SK-N-SH (cell line): ENCODE measurements at regions of chr10 and their contacts with region 1.

Region 1: GRCh38 chr10:114876602-114877300 is 55.2 kb downstream of the FHIP2A start:
- DNase-seq: peak; percentile 80
- H3K4me3 ChIP-seq: peak overlapping the region in 1 of 2 experiments; percentile 43; a peak in 1 of 4 replicates
- H3K27ac ChIP-seq: no peak overlapping the region
- H3K4me1 ChIP-seq: peaks cover 1 to 6% of the 10 kb centered on the region in 2 experiments; a peak in 1 of 4 replicates
- H3K27me3 ChIP-seq: no peaks in the 10 kb centered on the region
- CTCF ChIP-seq: peak; percentile 81
- EP300 ChIP-seq: no peak
- RAD21 ChIP-seq: peak; percentile 94

Region 2: DNA sequence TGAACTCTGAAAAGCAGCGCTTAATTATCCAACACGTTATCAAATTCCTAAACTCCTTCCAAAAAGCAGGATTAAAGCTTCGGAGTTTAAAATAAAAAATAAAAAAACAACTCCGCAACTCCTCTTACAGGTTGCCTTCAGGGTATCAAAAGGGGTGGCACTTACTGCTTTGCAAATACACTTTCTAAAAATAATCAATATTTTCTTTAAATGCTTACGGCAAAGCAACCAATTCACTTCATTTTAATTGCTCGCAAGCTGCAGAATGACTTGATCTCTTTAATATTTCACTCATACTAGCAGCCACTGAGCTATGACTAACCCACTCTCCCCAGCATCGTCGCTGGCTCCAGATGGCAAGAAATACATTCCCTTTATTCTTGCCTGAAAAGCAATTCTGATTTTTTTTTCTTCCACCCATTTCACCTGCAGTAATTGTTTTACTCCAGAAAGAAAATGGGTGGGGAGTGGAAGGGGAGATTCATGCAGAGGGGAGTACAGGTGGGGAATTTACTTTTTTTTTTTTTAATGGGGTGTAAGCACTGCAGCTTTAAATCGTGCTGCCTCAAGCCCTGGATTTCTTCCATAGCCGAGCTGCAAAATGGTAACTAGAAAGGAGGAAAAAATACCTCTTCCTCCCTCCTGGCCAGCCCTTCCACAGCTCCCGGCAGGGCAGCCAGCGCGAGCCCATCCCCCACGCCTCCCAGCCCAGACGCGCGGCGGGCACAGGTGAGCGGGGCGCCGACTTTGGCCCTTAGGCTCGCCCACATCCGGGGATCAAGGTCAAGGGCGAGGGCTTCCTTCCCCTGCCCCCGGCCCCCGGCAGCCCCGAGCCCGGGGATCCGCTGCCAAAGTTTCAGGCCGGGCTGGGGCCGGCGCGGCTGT is 109.4 kb before region 1 on chr10:
- CTCF ChIA-PET with region 1: no interaction called
- POLR2A ChIA-PET with region 1: no interaction called
- DNase-seq: peak; percentile 65
- H3K4me3 ChIP-seq: peak overlapping the region; percentile 64 to 77
- H3K27ac ChIP-seq: no peak overlapping the region
- H3K4me1 ChIP-seq: peaks cover 2 to 8% of the 10 kb centered on the region in 2 experiments; a peak in 3 of 4 replicates
- H3K27me3 ChIP-seq: no peaks in the 10 kb centered on the region
- CTCF ChIP-seq: no peak
- EP300 ChIP-seq: no peak
- RAD21 ChIP-seq: no peak

Region 3: DNA sequence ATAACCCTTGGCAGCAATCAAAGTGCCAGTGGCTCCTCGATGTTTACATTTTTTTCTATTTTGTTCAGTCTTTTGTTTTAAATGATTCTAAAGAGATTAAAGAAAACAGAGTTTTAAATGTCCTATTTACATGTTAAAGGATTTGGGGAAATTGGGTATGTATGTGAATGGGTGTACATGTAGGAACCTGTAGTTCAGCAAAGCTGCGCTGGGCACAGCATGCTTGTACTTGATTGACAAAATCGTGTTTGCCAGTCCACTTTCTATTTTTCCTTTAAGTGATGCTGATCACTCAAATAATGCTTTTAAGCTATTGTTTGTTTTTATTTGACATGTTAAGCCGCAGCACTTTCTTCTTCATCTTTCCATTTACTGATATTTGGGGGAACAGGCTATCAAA is 14.3 kb before region 1 on chr10:
- CTCF ChIA-PET with region 1: interaction called, 25 read pairs
- POLR2A ChIA-PET with region 1: no interaction called
- DNase-seq: no peak
- H3K4me3 ChIP-seq: no peak overlapping the region
- H3K27ac ChIP-seq: no peak overlapping the region
- H3K4me1 ChIP-seq: peaks cover 3 to 8% of the 10 kb centered on the region in 2 experiments; a peak in 1 of 4 replicates
- H3K27me3 ChIP-seq: no peaks in the 10 kb centered on the region
- CTCF ChIP-seq: no peak
- EP300 ChIP-seq: no peak
- RAD21 ChIP-seq: no peak

Region 4: GRCh38 chr10:114937962-114938855 is 61.5 kb after region 1 on chr10 and contains the start of gene TRUB1:
- CTCF ChIA-PET with region 1: interaction called, 17 read pairs
- POLR2A ChIA-PET with region 1: no interaction called
- DNase-seq: peak; percentile 87
- H3K4me3 ChIP-seq: peak within 1 kb of the TSS; percentile 86 to 99
- H3K27ac ChIP-seq: peak within 1 kb of the TSS; percentile 60 to 90
- H3K4me1 ChIP-seq: peaks cover 5 to 9% of the 10 kb centered on the region in 2 experiments; a peak in 2 of 4 replicates
- H3K27me3 ChIP-seq: no peaks in the 10 kb centered on the region
- CTCF ChIP-seq: no peak
- EP300 ChIP-seq: no peak
- RAD21 ChIP-seq: no peak
- polyA plus RNA-seq, gene TRUB1: 9.9 and 11.1 TPM in 2 replicates

Region 5: DNA sequence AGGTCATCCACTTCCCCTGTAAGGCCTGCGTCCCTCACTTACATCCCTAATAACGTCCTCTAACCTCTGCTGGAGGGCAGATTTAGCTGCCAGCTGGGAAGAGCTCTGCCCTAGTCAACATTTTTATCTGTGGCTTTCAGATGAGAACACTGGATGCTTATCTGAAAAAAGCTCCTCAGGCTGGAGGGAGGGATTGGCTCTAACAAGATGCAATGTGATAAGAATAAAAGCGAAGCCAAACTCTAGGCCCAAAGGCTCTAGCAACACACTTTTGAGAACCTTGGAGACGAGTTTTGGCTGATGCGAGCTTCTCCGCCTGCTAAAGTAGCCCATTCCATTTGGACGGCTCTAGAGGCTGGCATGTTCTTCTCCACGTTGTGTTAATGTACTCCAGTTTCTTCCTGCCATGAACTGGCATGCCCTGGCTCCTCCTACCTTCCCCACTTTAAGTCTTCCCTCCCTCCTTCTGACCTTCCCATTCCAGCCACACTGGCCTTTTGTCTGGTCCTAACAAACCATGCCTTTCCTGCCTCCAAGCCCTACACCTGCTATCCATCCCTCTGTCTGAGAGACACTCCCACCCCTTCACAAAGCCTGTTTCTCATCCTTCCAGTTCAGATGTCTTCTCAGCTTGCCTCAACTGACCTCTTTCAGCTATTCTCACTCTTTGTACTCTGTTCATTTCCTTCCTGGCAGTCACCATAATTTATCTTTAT is 153.9 kb after region 1 on chr10:
- CTCF ChIA-PET with region 1: interaction called, 11 read pairs
- POLR2A ChIA-PET with region 1: no interaction called
- DNase-seq: peak; percentile 55
- H3K4me3 ChIP-seq: no peak overlapping the region
- H3K27ac ChIP-seq: peak overlapping the region in 1 of 2 experiments; percentile 84; a peak in 2 of 4 replicates
- H3K4me1 ChIP-seq: peaks cover 0 to 21% of the 10 kb centered on the region in 2 experiments; a peak in 2 of 4 replicates
- H3K27me3 ChIP-seq: no peaks in the 10 kb centered on the region
- CTCF ChIP-seq: no peak
- EP300 ChIP-seq: peak in 1 of 2 experiments; percentile 90; a peak in 2 of 4 replicates
- RAD21 ChIP-seq: peak; percentile 4

Region 6: GRCh38 chr10:115092555-115093285 is 216.0 kb after region 1 on chr10:
- CTCF ChIA-PET with region 1: interaction called, 55 read pairs
- POLR2A ChIA-PET with region 1: no interaction called
- DNase-seq: peak; percentile 92
- H3K4me3 ChIP-seq: peak overlapping the region; percentile 66 to 71
- H3K27ac ChIP-seq: peak overlapping the region in 1 of 2 experiments; percentile 92; a peak in 3 of 4 replicates
- H3K4me1 ChIP-seq: no peaks in the 10 kb centered on the region; a peak in 2 of 4 replicates
- H3K27me3 ChIP-seq: peaks cover 22% of the 10 kb centered on the region; the same call in 1 of the 2 replicates
- CTCF ChIP-seq: no peak
- EP300 ChIP-seq: no peak
- RAD21 ChIP-seq: no peak; the same call in 1 of the 2 replicates

Region 7: GRCh38 chr10:115141254-115141653 is 264.5 kb after region 1 on chr10:
- CTCF ChIA-PET with region 1: interaction called, 21 read pairs
- POLR2A ChIA-PET with region 1: no interaction called
- DNase-seq: peak; percentile 4
- H3K4me3 ChIP-seq: no peak overlapping the region
- H3K27ac ChIP-seq: no peak overlapping the region
- H3K4me1 ChIP-seq: no peaks in the 10 kb centered on the region
- H3K27me3 ChIP-seq: no peaks in the 10 kb centered on the region
- CTCF ChIP-seq: peak; percentile 60
- EP300 ChIP-seq: no peak
- RAD21 ChIP-seq: peak; percentile 65